ENCODE measurements at regions of chr11 and their contacts with region 1.

Region 1: GRCh38 chr11:3091791-3092602 is 34.8 kb upstream of the CARS1 start:
- DNase-seq: peak; percentile 79
- ATAC-seq: peak; percentile 80 to 81
- H3K4me3 ChIP-seq: no peak overlapping the region
- H3K27ac ChIP-seq: no peak overlapping the region
- H3K4me1 ChIP-seq: peaks cover 17% of the 10 kb centered on the region
- H3K27me3 ChIP-seq: no peaks in the 10 kb centered on the region
- CTCF ChIP-seq: peak; percentile 99

Region 2: DNA sequence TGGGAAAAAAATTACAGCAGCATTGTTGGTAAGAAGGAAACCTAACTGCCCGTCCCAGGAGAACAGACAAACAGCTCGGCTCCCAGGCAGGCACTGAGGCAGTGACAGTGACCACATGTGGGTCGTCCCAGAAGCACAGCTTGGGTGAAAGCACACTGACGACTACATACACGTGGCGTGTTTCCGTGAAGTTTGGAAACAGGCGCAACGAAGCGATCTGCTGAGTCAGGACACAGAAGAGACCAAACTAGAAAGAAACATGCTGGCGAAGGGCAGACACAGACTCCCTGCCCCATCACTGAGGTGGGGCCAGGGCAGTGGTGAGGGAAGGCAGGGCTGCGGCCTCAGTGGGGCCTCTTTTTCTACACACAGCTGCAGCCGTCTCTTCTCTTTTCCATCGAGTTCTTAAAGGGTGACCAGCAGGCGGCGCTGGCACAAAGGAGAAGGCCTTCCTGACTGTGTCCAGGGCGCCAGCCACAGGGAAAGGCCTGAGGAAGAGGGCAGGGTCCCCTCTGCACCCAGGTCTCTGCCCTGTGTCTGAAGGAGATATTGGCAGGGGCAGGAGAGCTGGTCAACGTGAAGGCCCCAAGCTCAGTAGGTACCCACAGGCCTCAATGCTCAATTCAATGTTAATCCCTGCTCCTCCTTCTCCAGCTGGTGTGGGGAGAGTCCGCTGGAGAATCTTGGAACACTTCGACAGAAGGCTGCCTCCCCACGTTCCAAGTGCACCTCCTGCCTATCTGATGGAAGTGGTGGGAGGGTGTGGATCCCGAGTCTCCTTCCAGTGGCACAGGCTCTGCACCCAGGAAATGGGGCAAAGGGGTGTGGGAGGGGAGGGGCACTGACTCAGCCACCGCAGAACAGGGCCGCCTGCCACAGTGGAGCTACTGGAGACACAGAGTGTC is 54.7 kb before region 1 on chr11:
- intact Hi-C with region 1: loop called (anchors 10 kb)
- DNase-seq: peak; percentile 86
- ATAC-seq: peak; percentile 86 to 88
- H3K4me3 ChIP-seq: no peak overlapping the region
- H3K27ac ChIP-seq: peak overlapping the region; percentile 44
- H3K4me1 ChIP-seq: peaks cover 11% of the 10 kb centered on the region
- H3K27me3 ChIP-seq: no peaks in the 10 kb centered on the region
- CTCF ChIP-seq: peak; percentile 71